HCT116 (cell line): ENCODE measurements at regions of chr17 and their contacts with region 1.

Region 1: DNA sequence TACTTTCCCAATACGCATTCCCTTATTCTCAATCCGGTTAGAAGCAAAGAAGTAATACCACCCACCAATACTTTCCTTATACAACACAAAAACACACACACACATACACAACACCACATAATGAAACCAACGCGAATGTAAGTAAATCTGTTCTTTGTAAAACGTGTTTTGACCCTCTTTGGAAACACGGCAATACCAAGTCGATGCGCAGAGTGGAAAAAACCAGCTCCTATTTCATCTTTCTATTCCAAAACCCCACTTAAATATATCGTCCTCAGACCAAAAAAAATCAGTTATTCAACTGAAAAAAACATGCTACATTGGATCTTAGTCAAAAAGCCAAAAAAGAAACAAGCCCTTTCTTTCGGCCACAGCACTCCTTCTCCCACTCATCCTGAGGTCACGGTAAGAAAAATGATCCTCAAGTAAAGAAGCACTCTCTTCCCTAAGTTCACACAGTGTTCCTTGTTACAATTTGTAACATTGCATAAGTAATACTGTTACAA is 31.0 kb upstream of the ARL4D start:
- DNase-seq: peak; percentile 96
- ATAC-seq: peak; percentile 58
- H3K4me3 ChIP-seq: peak overlapping the region; percentile 1 to 58; a peak in 3 of 4 replicates
- H3K27ac ChIP-seq: peak overlapping the region; percentile 95
- H3K4me1 ChIP-seq: peaks cover 20 to 37% of the 10 kb centered on the region in 2 experiments
- H3K27me3 ChIP-seq: no peaks in the 10 kb centered on the region
- CTCF ChIP-seq: no peak
- POLR2A ChIP-seq: peak; percentile 100
- RAD21 ChIP-seq: no peak; the same call in 1 of the 2 replicates

Region 2: GRCh38 chr17:42723636-42724035 is 644.2 kb before region 1 on chr17:
- CTCF ChIA-PET with region 1: no interaction called
- POLR2A ChIA-PET with region 1: no interaction called
- RAD21 ChIA-PET with region 1: no interaction called
- intact Hi-C with region 1: no loop called
- DNase-seq: no peak
- ATAC-seq: no peak
- H3K4me3 ChIP-seq: no peak overlapping the region
- H3K27ac ChIP-seq: no peak overlapping the region
- H3K4me1 ChIP-seq: no peaks in the 10 kb centered on the region
- H3K27me3 ChIP-seq: no peaks in the 10 kb centered on the region
- CTCF ChIP-seq: no peak
- POLR2A ChIP-seq: no peak
- RAD21 ChIP-seq: no peak

Region 3: GRCh38 chr17:43024407-43025289 is 343.1 kb before region 1 on chr17 and contains the start of gene RND2:
- CTCF ChIA-PET with region 1: no interaction called
- POLR2A ChIA-PET with region 1: interaction called, 11 read pairs
- RAD21 ChIA-PET with region 1: no interaction called
- intact Hi-C with region 1: no loop called
- DNase-seq: peak; percentile 91
- ATAC-seq: peak; percentile 72
- H3K4me3 ChIP-seq: peak within 1 kb of the TSS; percentile 45 to 61
- H3K27ac ChIP-seq: peak within 1 kb of the TSS; percentile 63
- H3K4me1 ChIP-seq: peaks cover 9 to 38% of the 10 kb centered on the region in 2 experiments; a peak in 3 of 4 replicates
- H3K27me3 ChIP-seq: no peaks in the 10 kb centered on the region
- CTCF ChIP-seq: peak in 2 of 3 experiments; percentile 63 to 75; a peak in 5 of 6 replicates
- POLR2A ChIP-seq: no peak
- RAD21 ChIP-seq: peak; percentile 87
- total RNA-seq, gene RND2: 0.66 TPM

Region 4: DNA sequence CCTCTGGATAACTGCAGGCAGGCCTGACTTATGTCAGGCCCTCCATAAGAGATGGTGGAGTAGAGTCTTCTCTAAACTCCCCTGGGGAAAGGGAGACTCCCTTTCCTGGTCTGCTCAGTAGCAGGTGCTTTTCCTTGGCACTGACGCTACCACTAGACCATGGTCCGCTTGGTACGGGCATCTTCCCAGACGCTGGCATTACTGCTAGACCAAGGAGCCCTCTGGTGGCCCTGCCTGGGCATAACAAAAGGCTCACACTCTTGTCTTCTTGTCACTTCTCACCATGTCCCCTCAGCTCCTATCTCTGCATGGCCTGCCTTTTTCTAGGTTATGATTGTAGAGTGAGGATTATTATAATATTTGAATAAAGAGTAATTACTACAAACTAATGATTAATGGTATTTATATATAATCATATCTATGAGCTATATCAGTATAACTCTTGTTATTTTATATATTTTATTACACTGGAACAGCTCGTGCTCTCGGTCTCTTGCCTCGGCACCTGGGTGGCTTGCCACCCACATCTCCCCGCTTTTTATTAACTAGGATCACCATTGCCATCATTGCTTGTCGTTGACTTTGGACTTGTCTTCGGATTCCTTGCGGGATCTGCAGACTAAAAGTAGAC is 28.8 kb before region 1 on chr17:
- CTCF ChIA-PET with region 1: no interaction called
- POLR2A ChIA-PET with region 1: interaction called, 13 read pairs
- RAD21 ChIA-PET with region 1: no interaction called
- intact Hi-C with region 1: no loop called
- DNase-seq: no peak
- ATAC-seq: peak; percentile 67; the same call in 1 of the 2 replicates
- H3K4me3 ChIP-seq: no peak overlapping the region
- H3K27ac ChIP-seq: no peak overlapping the region
- H3K4me1 ChIP-seq: no peaks in the 10 kb centered on the region
- H3K27me3 ChIP-seq: no peaks in the 10 kb centered on the region
- CTCF ChIP-seq: peak; percentile 40 to 74 (median 59); a peak in 5 of 6 replicates
- POLR2A ChIP-seq: no peak
- RAD21 ChIP-seq: peak; percentile 72

Region 5: GRCh38 chr17:43356999-43357398 is 10.8 kb before region 1 on chr17:
- CTCF ChIA-PET with region 1: no interaction called
- POLR2A ChIA-PET with region 1: interaction called, 35 read pairs
- RAD21 ChIA-PET with region 1: no interaction called
- intact Hi-C with region 1: no loop called
- DNase-seq: no peak
- ATAC-seq: no peak
- H3K4me3 ChIP-seq: no peak overlapping the region
- H3K27ac ChIP-seq: no peak overlapping the region
- H3K4me1 ChIP-seq: no peaks in the 10 kb centered on the region
- H3K27me3 ChIP-seq: no peaks in the 10 kb centered on the region
- CTCF ChIP-seq: no peak
- POLR2A ChIP-seq: no peak
- RAD21 ChIP-seq: no peak

Region 6: GRCh38 chr17:43381204-43381603 is 13.4 kb after region 1 on chr17:
- CTCF ChIA-PET with region 1: no interaction called
- POLR2A ChIA-PET with region 1: interaction called, 152 read pairs
- RAD21 ChIA-PET with region 1: no interaction called
- intact Hi-C with region 1: no loop called
- DNase-seq: no peak
- ATAC-seq: no peak
- H3K4me3 ChIP-seq: no peak overlapping the region
- H3K27ac ChIP-seq: no peak overlapping the region
- H3K4me1 ChIP-seq: no peaks in the 10 kb centered on the region
- H3K27me3 ChIP-seq: no peaks in the 10 kb centered on the region
- CTCF ChIP-seq: no peak
- POLR2A ChIP-seq: no peak
- RAD21 ChIP-seq: no peak

Region 7: DNA sequence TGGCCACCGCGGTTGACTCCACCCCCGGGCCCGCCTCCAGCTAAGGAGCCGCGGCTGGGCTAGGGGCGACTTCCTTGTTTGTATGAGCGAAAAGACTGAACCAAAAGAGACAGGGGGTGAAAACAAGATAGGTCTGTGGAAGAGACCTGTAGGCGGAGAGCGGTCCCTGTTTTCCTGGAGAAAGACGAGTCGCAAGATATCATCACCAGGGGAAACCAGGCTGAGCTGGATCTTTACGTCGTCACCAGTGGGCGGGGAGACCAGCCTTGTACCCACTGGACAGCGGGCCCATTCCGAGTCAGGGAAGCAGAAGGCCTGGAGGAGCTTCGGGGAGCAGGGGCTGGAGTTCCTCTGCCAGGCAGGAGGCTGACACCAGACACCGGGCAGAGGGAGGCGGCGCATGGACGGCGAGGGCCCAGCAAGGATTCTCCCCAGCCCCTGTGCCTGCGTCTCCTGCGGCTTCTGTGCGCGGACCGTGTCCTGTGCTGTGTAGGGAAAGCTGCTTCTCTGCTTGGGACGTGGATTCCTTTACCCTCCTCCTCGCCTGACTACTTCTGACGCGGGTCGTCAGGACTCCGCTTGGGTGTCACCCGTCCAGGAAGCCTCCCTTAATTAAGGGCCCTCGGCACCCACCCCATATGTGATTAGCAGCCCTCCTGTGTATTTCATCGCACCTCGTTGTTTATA is 20.7 kb after region 1 on chr17:
- CTCF ChIA-PET with region 1: interaction called, 9 read pairs
- POLR2A ChIA-PET with region 1: interaction called, 152 read pairs
- RAD21 ChIA-PET with region 1: interaction called, 3 to 5 read pairs
- intact Hi-C with region 1: no loop called
- DNase-seq: peak; percentile 86
- ATAC-seq: peak; percentile 86
- H3K4me3 ChIP-seq: peak overlapping the region; percentile 45 to 69
- H3K27ac ChIP-seq: peak overlapping the region; percentile 68
- H3K4me1 ChIP-seq: peaks cover 5 to 25% of the 10 kb centered on the region in 2 experiments; a peak in 3 of 4 replicates
- H3K27me3 ChIP-seq: no peaks in the 10 kb centered on the region
- CTCF ChIP-seq: no peak
- POLR2A ChIP-seq: peak; percentile 62
- RAD21 ChIP-seq: no peak

Region 8: GRCh38 chr17:43393944-43394482 is 26.2 kb after region 1 on chr17:
- CTCF ChIA-PET with region 1: interaction called, 5 read pairs
- POLR2A ChIA-PET with region 1: interaction called, 37 read pairs
- RAD21 ChIA-PET with region 1: interaction called in 1 of 2 experiments, 5 read pairs
- intact Hi-C with region 1: no loop called
- DNase-seq: peak; percentile 79
- ATAC-seq: peak; percentile 59
- H3K4me3 ChIP-seq: no peak overlapping the region
- H3K27ac ChIP-seq: no peak overlapping the region
- H3K4me1 ChIP-seq: peaks cover 3 to 24% of the 10 kb centered on the region in 2 experiments; a peak in 3 of 4 replicates
- H3K27me3 ChIP-seq: no peaks in the 10 kb centered on the region
- CTCF ChIP-seq: peak; percentile 82 to 99 (median 96)
- POLR2A ChIP-seq: no peak
- RAD21 ChIP-seq: peak; percentile 100